Activated CD4-positive, alpha-beta memory T cell treated with anti-CD3 and anti-CD28 coated beads, Interleukin-2, amount 10 ng/mL, durations not matched to agents 7 days and 5 days (primary cell): ENCODE measurements at regions of chr4 and their contacts with region 1.

Region 1: DNA sequence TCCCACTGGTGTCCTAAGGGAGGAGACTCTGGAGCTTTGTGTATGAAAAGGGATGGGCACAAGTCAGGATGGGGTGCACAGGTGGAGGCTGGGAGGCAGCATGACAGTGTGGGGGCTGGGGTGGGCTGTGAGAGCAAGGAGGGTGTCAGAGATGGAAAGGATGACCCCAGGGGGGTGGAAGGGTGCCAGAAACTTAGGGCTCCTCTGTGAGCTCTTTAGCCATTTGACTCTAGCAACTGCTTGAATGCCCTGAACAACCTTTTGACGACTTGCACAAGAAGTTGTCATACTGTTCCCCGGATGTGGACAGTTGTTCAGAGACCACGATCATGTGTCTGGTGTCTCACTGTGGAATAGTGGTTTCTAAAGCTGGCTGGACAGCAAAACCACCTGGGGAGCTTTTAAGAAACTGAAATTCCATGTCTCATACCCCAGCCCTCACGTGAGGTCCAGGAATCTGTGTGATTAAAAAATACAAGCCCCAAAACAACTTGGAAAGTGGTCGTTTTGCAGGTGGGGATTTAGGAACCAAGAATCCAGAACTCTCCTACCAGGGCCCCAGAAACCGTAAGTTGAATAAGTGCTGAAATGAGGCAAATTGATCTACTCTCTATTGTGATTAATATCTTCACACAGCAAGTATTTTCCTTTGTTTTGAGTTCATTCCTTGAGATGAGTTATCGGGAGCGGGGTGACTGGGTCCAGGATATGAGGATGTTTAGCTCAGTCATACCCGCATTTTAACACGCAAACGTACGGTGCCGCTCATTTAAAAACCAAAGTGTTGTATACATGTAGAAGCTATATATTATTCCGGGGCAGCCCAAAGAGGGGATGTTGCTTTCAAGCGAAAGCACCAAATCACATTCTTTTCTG is 3.4 kb downstream of the RHOH start:
- DNase-seq: peak; percentile 86
- H3K4me3 Mint-ChIP-seq: peak overlapping the region; percentile 97
- H3K27ac Mint-ChIP-seq: peak overlapping the region; percentile 99
- H3K4me1 Mint-ChIP-seq: peaks cover 43% of the 10 kb centered on the region
- H3K27me3 Mint-ChIP-seq: no peaks in the 10 kb centered on the region

Region 2: GRCh38 chr4:40212674-40213527 is 12.7 kb after region 1 on chr4:
- CTCF ChIA-PET with region 1: interaction called, 9 read pairs
- POLR2A ChIA-PET with region 1: interaction called, 403 read pairs
- DNase-seq: no peak
- H3K4me3 Mint-ChIP-seq: peak overlapping the region; percentile 74
- H3K27ac Mint-ChIP-seq: peak overlapping the region; percentile 80
- H3K4me1 Mint-ChIP-seq: peaks cover 92% of the 10 kb centered on the region
- H3K27me3 Mint-ChIP-seq: no peaks in the 10 kb centered on the region

Region 3: DNA sequence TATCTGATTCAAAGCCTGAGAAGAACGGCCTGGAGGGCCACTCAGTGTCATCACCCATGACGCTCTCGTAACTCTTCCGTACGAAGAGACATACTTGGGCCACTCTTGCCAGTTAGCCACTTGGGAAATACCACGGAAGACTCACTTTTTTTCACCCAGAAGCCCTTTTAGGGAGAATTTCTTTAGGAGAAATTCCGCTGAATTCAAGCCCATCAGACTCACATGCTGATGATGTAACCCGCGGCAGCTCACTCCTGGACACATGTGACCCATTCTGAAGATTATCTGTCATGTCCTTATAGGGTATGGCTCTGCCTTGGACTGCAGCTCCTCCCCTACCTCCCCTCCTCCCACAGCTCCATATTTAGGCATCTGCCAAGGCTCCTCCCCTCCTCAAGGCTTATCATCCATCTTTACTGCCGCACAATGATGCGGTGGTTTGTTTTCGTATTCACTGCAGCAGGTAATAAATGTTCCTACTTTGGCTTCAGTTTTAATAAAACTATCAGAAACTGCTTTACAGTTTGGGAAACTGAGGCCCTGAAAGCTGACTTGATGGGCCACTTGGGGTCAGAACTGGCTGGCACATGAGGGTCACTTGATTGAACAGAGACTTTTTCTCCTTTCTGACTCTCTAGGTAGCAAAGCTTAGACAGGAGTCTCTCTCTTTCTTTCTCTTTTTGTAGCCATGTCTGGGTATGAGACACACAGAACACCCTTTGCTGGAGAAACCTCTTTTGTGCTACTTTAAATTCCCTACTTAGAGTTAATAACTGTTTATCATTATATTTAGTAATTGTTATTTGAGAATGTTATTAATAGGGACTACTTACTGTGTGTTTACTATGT is 38.7 kb after region 1 on chr4:
- CTCF ChIA-PET with region 1: interaction called, 9 read pairs
- POLR2A ChIA-PET with region 1: interaction called, 112 read pairs
- DNase-seq: peak; percentile 87
- H3K4me3 Mint-ChIP-seq: peak overlapping the region; percentile 67
- H3K27ac Mint-ChIP-seq: peak overlapping the region; percentile 93
- H3K4me1 Mint-ChIP-seq: peaks cover 89% of the 10 kb centered on the region
- H3K27me3 Mint-ChIP-seq: no peaks in the 10 kb centered on the region

Region 4: DNA sequence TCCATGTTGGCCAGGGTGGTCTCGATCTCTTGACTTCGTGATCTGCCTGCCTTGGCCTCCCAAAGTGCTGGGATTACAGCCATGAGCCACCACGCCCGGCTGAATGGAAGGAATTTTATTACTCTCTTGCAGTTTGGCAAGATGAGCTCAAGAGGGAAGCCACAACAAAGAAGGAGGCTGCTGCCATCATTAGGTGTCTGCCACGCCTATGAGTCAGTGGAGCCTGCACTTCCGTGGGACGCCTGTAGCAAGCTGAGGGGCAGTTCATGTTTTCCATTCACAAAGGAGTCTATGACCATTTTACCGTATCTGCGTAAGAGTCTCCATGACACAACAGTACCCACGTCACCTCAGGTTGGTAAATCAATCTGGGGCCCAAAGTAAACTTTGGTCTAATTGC is 83.7 kb after region 1 on chr4:
- CTCF ChIA-PET with region 1: no interaction called
- POLR2A ChIA-PET with region 1: interaction called, 10 read pairs
- DNase-seq: peak; percentile 78
- H3K4me3 Mint-ChIP-seq: no peak overlapping the region
- H3K27ac Mint-ChIP-seq: peak overlapping the region; percentile 71
- H3K4me1 Mint-ChIP-seq: peaks cover 30% of the 10 kb centered on the region
- H3K27me3 Mint-ChIP-seq: no peaks in the 10 kb centered on the region

Region 5: GRCh38 chr4:40316782-40317635 is 116.8 kb after region 1 on chr4:
- CTCF ChIA-PET with region 1: interaction called, 11 read pairs
- POLR2A ChIA-PET with region 1: interaction called, 143 read pairs
- DNase-seq: peak; percentile 72
- H3K4me3 Mint-ChIP-seq: peak overlapping the region; percentile 65
- H3K27ac Mint-ChIP-seq: peak overlapping the region; percentile 81
- H3K4me1 Mint-ChIP-seq: peaks cover 35% of the 10 kb centered on the region
- H3K27me3 Mint-ChIP-seq: peaks cover 8% of the 10 kb centered on the region